ENCODE measurements at regions of chr11 and their contacts with region 1.

Region 1: DNA sequence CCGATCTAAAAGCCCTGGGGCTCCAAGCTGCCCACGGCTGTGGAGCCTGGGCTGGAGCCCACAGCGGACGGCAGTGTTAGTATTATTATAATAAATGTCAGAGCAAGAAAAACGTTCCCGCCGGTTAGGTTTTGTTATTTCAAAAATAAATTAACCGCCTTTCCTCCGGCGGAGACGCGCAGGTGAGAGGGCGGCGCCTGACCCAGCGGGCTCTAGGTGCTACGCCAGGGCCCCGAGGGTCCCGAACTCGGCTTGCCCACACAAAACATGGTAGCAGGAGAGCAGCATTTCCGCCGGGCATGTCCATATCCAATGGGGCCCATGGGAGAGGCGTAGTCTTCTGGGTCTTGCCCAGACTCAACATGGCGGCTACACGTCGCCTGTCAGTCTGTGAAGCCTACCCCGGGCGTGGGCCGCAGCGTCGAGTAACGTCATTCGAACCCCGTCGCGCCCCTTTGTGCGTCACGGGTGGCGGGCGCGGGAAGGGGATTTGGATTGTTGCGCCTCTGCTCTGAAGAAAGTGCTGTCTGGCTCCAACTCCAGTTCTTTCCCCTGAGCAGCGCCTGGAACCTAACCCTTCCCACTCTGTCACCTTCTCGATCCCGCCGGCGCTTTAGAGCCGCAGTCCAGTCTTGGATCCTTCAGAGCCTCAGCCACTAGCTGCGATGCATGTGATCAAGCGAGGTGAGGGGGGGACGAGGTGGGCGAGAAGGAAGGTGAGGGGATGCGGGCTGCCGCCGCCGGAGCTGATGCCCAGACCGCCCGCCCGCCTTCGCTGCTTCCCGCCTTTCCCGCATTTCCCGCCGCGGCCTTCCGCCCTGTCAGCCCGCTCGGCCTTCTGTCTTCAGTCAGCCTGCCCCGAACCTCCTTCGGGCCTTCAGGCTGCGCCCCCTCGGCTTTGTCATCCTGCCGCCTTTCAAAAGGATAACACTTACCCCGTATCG is at the start of gene RRM1:
- DNase-seq: peak; percentile 93
- H3K4me3 Mint-ChIP-seq: peak within 1 kb of the TSS; percentile 96
- H3K27ac Mint-ChIP-seq: peak within 1 kb of the TSS; percentile 97
- H3K4me1 Mint-ChIP-seq: peaks cover 76% of the 10 kb centered on the region
- H3K27me3 Mint-ChIP-seq: no peaks in the 10 kb centered on the region
- total RNA-seq, gene RRM1: 155 and 173 TPM in 2 replicates

Region 2: GRCh38 chr11:3781423-3781822 is 313.2 kb before region 1 on chr11:
- intact Hi-C with region 1: loop called (anchors 1 kb)
- DNase-seq: no peak
- H3K4me3 Mint-ChIP-seq: peak overlapping the region; percentile 47
- H3K27ac Mint-ChIP-seq: peak overlapping the region; percentile 71
- H3K4me1 Mint-ChIP-seq: peaks cover 58% of the 10 kb centered on the region
- H3K27me3 Mint-ChIP-seq: no peaks in the 10 kb centered on the region

Region 3: GRCh38 chr11:4044976-4045646 is 49.5 kb before region 1 on chr11:
- intact Hi-C with region 1: no loop called
- DNase-seq: no peak
- H3K4me3 Mint-ChIP-seq: no peak overlapping the region
- H3K27ac Mint-ChIP-seq: no peak overlapping the region
- H3K4me1 Mint-ChIP-seq: peaks cover 15% of the 10 kb centered on the region
- H3K27me3 Mint-ChIP-seq: no peaks in the 10 kb centered on the region